ENCODE measurements at regions of chr14 and their contacts with region 1.

Region 1: GRCh38 chr14:24160850-24161804 is at the start of gene IRF9:
- DNase-seq: peak; percentile 98
- ATAC-seq: peak; percentile 87
- H3K4me3 Mint-ChIP-seq: peak within 1 kb of the TSS; percentile 97
- H3K27ac Mint-ChIP-seq: peak within 1 kb of the TSS; percentile 100
- H3K4me1 Mint-ChIP-seq: peaks cover 47% of the 10 kb centered on the region
- H3K27me3 Mint-ChIP-seq: no peaks in the 10 kb centered on the region
- total RNA-seq, gene IRF9: 234 to 252 TPM

Region 2: DNA sequence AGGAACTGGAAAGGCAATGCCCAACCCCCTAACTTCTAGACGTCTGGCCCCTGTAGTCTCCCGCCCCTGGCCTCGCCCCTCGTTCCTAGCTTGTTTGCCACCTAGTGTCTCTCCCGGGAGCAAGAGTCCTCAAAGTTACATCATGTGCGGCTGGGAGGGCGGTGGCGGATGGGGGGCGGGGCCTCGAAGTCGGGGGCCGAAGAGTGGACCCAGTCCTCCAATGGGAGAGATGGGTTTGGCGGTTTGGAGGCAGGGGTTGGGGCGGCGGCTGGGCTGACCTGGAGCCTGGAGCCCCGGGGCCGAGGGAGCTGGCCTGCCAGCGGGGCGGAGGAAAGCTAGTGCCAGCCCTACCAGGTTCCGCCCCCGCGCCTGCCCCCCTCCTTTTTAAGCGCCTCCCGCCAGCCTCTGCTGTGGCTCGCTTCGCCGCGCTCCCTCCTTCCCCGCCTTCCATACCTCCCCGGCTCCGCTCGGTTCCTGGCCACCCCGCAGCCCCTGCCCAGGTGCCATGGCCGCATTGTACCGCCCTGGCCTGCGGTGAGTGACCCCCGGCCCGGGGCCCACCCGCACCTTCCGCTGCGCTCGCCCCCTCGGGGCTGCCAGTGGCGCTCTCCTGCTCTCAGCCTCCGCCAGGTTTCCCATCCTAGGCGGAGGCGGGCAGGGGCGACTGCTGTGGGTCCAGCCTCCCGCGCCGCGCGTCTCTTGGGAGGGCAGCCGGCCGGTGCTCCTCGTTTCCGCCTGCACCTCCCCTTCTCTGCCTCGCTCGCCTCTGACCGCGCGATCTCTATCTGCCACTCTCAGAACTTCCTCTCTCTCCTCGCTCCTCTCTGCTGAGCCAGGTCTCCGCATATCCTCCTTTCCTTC is 67.0 kb before region 1 on chr14 and contains the start of gene PCK2:
- POLR2A ChIA-PET with region 1: interaction called, 32 read pairs
- DNase-seq: peak; percentile 83
- ATAC-seq: peak; percentile 77
- H3K4me3 Mint-ChIP-seq: peak within 1 kb of the TSS; percentile 95
- H3K27ac Mint-ChIP-seq: peak within 1 kb of the TSS; percentile 97
- H3K4me1 Mint-ChIP-seq: peaks cover 29% of the 10 kb centered on the region
- H3K27me3 Mint-ChIP-seq: no peaks in the 10 kb centered on the region
- total RNA-seq, gene PCK2: 47.4 to 50.6 TPM

Region 3: GRCh38 chr14:24135834-24136542 is 25.1 kb before region 1 on chr14 and contains the start of gene PSME1:
- POLR2A ChIA-PET with region 1: interaction called, 347 read pairs
- DNase-seq: peak; percentile 97
- ATAC-seq: peak; percentile 87
- H3K4me3 Mint-ChIP-seq: peak within 1 kb of the TSS; percentile 96
- H3K27ac Mint-ChIP-seq: peak within 1 kb of the TSS; percentile 94
- H3K4me1 Mint-ChIP-seq: peaks cover 51% of the 10 kb centered on the region
- H3K27me3 Mint-ChIP-seq: no peaks in the 10 kb centered on the region
- total RNA-seq, gene PSME1: 430 to 443 TPM

Region 4: DNA sequence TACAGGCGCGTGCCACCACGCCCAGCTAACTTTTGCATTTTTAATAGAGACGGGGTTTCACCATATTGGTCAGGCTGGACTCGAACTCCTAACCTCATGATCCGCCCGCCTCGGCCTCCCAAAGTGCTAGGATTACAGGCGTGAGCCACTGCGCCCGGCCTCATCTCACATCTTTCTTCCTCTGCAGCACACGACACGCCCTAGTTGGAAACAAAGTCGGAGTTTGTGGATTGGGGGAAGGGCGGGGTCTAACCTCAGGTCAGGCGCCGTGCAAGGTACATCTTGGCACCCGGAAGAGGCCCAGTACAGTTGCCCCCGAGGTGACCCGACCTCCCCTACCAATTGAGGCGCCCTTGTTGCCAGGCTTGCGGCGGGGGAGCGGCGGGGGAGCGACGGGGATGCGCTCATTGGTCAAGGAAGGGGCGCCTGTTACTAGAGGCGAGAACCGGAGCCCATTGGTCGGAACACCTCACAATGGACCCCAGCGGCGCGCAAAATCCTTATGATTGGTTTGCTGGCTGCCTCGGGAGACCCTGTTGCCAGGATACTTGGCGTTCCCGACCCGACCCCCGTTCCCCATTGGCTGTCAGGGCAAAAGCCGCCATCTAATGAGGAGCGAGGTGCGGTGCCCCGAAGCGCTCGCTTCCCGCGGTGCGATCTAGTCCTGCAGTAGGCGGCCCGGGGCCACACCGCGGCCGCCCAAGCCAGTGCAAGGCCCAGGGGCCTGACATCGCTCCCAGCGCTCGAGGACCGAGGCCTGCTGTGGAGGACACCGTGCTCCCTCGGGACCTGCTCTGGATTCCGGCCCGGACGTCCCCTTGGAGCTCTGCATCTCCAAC is 10.5 kb after region 1 on chr14 and contains the start of gene REC8:
- POLR2A ChIA-PET with region 1: interaction called, 82 read pairs
- DNase-seq: peak; percentile 78
- ATAC-seq: peak; percentile 86
- H3K4me3 Mint-ChIP-seq: peak within 1 kb of the TSS; percentile 93
- H3K27ac Mint-ChIP-seq: peak within 1 kb of the TSS; percentile 88
- H3K4me1 Mint-ChIP-seq: peaks cover 19% of the 10 kb centered on the region
- H3K27me3 Mint-ChIP-seq: no peaks in the 10 kb centered on the region
- total RNA-seq, gene REC8: 55.1 to 60.7 TPM

Region 5: DNA sequence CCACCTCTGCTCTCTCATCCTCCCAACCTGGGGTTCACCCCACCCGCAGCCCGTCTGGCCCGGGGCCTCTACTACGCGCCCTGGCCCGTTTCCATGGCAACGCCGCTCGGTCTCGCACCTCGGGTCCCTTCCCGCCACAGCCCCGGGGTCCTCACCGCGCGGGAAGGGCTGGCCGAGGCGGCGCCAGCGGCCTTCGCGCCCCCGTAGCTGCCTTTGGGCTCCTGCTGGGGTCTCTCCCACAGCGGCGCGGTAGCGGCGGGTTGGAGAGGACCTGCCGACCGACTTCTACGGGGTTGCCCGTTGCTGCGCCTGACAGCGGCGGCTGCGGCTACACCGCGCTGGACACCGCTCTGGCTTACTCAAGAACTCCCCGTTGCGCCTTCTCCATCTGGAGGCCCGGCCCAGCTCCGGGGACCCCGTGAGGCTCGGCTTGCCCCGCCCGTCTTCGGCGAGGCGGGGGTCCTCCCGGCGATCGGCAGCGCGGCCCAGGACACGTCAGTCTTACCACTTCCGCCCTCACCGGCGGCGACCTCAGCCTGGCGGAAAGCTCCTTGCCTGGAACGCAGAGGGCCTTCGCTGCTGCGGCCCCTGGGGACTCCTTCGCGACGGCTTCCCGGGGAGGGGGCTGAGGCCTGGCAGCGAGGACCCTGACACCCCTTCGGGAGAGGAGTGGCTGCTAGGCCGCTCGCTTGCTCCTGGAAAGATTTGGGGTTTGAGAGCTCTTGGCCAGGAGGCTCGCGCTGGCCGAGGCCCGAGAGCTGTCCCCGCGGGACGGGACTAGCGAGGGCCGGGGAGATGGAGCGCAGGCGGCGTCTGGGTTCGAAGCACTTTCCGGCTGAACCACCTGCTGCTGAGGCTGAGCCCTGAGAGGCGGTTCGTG is 34.3 kb after region 1 on chr14 and contains the start of gene TM9SF1:
- POLR2A ChIA-PET with region 1: interaction called, 49 read pairs
- DNase-seq: peak; percentile 93
- ATAC-seq: peak; percentile 93
- H3K4me3 Mint-ChIP-seq: peak within 1 kb of the TSS; percentile 97
- H3K27ac Mint-ChIP-seq: peak within 1 kb of the TSS; percentile 96
- H3K4me1 Mint-ChIP-seq: peaks cover 42% of the 10 kb centered on the region
- H3K27me3 Mint-ChIP-seq: no peaks in the 10 kb centered on the region
- total RNA-seq, gene TM9SF1: 28.9 to 29.6 TPM

Region 6: GRCh38 chr14:24299255-24300195 is 138.4 kb after region 1 on chr14 and contains the starts of genes DHRS1 and NOP9:
- POLR2A ChIA-PET with region 1: interaction called, 12 read pairs
- DNase-seq: peak; percentile 97
- ATAC-seq: peak; percentile 82
- H3K4me3 Mint-ChIP-seq: peak within 1 kb of the TSS; percentile 94
- H3K27ac Mint-ChIP-seq: peak within 1 kb of the TSS; percentile 95
- H3K4me1 Mint-ChIP-seq: peaks cover 41% of the 10 kb centered on the region
- H3K27me3 Mint-ChIP-seq: no peaks in the 10 kb centered on the region
- total RNA-seq, gene DHRS1: 36.0 to 41.9 TPM
- total RNA-seq, gene NOP9: 28.7 to 31.1 TPM

Measured in activated naive CD8-positive, alpha-beta T cell treated with anti-CD3 and anti-CD28 coated beads, Interleukin-2, amount 10 ng/mL, durations not matched to agents 7 days and 5 days (primary cell).